PC-3 (cell line): ENCODE measurements at regions of chr5 and their contacts with region 1.

Region 1: DNA sequence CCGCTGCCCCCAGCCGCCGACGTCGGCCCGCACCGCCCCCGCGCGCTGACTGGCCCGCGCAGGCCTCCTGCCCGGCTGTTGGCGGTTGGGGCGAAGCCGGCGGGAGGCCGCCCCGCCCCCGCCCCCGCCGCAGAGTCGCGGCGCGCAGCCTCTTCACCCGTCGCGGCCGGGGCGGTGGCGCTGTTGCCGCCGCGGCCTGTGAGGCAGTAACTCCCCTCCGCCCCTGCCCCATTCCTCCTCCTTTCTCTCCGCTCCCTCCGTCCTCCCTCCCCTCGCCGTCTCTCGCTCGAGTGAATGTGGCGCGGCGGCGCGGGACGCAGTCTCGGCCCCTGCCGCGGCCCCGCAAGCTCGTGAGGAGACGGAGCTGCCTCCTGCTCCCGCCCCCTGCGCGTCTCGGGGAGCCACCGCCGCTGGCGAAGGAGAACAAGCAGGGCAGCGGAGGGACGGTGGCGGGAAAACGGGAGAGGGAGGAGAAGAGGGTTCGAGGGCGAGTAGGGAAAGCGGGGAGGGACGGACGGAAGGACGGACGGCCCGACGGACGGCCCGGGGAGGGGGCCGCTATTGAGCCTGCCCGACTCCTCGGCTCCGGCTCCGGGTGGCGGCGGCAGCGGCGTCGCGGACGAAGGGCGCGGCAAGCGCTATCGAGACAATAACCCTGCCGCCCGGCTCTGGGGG is 637 bp upstream of the ERBIN start:
- DNase-seq: peak; percentile 73
- ATAC-seq: peak; percentile 69
- H3K4me3 ChIP-seq: peak overlapping the region; percentile 88
- H3K27ac ChIP-seq: peak overlapping the region; percentile 87
- H3K4me1 ChIP-seq: peaks cover 15% of the 10 kb centered on the region
- H3K27me3 ChIP-seq: no peaks in the 10 kb centered on the region
- CTCF ChIP-seq: no peak; the same call in 1 of the 2 replicates

Region 2: DNA sequence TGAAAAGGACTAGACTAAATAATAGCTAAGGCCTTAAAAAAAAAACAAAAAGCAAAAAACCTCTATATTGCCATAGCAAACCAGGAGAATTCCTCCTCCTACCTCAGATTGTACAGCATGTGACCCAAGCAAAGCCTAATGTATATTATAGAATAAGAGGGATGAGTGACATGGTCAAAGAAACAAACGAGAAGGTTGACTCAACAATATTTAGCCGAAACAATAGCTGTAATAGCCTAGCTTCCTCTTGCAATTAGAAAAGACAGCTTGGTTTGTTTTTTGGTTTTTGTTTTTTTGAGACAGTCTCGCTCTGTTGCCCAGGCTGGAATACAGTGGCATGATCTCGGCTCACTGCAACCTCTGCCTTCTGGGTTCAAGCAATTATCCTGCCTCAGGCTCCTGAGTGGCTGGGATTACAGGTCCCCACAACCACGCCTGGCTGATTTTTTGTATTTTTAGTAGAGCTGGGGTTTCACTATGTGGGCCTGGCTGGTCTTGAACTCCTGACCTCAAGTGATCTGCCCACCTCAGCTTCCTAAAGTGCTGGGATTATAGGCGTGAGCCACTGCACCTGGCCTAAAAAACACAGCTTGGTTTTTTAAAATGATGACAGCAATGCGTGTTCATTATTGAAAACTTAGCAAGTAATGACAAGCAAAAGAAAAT is 198.1 kb before region 1 on chr5:
- CTCF ChIA-PET with region 1: no interaction called
- POLR2A ChIA-PET with region 1: interaction called, 14 read pairs
- intact Hi-C with region 1: loop called (anchors 5 kb)
- DNase-seq: no peak
- ATAC-seq: no peak
- H3K4me3 ChIP-seq: no peak overlapping the region
- H3K27ac ChIP-seq: no peak overlapping the region
- H3K4me1 ChIP-seq: peaks cover 5% of the 10 kb centered on the region; the same call in 1 of the 2 replicates
- H3K27me3 ChIP-seq: no peaks in the 10 kb centered on the region
- CTCF ChIP-seq: no peak

Region 3: GRCh38 chr5:65750938-65751337 is 174.8 kb before region 1 on chr5:
- CTCF ChIA-PET with region 1: no interaction called
- POLR2A ChIA-PET with region 1: interaction called, 13 read pairs
- intact Hi-C with region 1: no loop called
- DNase-seq: no peak
- ATAC-seq: no peak
- H3K4me3 ChIP-seq: no peak overlapping the region
- H3K27ac ChIP-seq: no peak overlapping the region
- H3K4me1 ChIP-seq: no peaks in the 10 kb centered on the region
- H3K27me3 ChIP-seq: no peaks in the 10 kb centered on the region
- CTCF ChIP-seq: no peak

Region 4: DNA sequence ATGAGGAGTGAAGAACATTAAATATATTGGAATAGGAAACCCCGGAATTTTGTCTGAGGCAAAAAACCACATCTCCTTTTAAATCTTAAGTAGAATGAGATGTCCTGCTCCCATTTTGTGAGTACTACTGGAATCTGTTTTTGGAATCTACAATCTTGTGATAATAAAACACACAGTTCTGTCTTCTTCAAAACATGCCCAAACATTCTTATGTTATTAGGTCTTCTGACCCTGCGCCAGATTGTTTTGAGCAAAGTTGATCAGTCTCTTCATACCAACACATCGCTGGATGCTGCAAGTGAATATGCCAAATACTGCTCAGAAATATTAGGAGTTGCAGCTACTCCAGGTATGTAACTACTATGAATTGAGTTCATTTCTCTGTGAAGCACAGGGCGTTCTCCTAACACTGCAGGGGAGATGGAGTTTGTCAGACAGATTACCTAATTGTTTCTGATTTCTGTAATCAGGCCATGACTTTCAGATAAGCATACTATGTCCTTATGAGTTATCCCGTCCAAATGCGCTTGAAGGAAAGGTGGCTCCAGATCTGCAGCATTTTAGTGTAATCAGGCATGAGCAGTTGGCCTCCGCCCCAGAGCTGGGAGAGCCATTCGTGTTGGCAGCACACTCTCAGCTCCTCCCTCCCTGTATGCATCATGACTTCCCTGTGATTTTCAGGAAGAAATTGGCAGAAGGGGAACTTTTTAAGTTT is 115.8 kb before region 1 on chr5:
- CTCF ChIA-PET with region 1: no interaction called
- POLR2A ChIA-PET with region 1: interaction called, 4 read pairs
- intact Hi-C with region 1: loop called (anchors 2 kb)
- DNase-seq: peak; percentile 71
- ATAC-seq: peak; percentile 82
- H3K4me3 ChIP-seq: no peak overlapping the region
- H3K27ac ChIP-seq: peak overlapping the region; percentile 97
- H3K4me1 ChIP-seq: peaks cover 42% of the 10 kb centered on the region
- H3K27me3 ChIP-seq: no peaks in the 10 kb centered on the region
- CTCF ChIP-seq: no peak

Region 5: DNA sequence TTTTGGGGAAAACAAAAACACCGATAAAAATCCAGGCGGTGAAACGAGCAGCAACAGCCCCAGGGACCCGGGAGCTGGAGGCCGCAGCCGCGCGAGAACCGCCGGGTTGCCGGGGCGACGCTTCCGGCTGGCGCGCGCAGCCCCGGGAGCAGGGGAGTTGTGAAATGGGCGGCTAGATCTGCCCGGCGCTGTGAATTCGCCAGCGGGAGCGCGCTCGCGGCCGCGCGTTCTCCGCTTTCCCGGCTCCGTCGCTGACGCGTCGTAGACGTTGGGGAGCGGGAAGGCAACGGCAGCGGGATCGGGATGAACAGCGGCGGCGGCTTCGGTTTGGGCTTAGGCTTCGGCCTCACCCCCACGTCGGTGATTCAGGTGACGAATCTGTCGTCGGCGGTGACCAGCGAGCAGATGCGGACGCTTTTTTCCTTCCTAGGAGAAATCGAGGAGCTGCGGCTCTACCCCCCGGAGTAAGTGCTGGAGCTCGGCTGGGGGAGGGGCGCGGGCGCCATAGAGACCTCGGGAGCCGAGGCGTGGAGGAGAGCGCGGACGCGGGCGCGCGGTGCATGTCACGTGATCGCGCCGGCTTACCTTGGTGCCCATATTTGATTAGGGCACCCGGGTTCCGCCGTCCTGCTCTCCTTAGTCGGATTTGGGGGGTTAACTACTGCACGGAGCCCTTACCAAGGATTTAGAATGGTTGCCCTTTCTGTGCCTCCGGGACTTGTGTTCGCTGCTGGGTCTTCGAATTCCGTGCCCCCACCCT is 218.5 kb after region 1 on chr5 and contains the start of gene SREK1:
- CTCF ChIA-PET with region 1: no interaction called
- POLR2A ChIA-PET with region 1: no interaction called
- intact Hi-C with region 1: loop called (anchors 10 kb)
- DNase-seq: peak; percentile 77
- ATAC-seq: peak; percentile 83
- H3K4me3 ChIP-seq: peak within 1 kb of the TSS; percentile 85
- H3K27ac ChIP-seq: peak within 1 kb of the TSS; percentile 80
- H3K4me1 ChIP-seq: no peaks in the 10 kb centered on the region
- H3K27me3 ChIP-seq: no peaks in the 10 kb centered on the region
- CTCF ChIP-seq: no peak
- total RNA-seq, gene SREK1: 34.8 and 43.1 TPM in 2 replicates